Activated T-helper 1 cell treated with anti-CD3 and anti-CD28 coated beads, Interleukin-12 subunit alpha, Interleukin-12 subunit beta, Interleukin-2, Interleukin-4 antibody, amounts not matched to agents 30 ng/mL and 10 ng/mL and 1 ng/mL, durations not matched to agents 14 hours and 24 hours and 36 hours (primary cell): ENCODE measurements at regions of chr2 and their contacts with region 1.

Region 1: DNA sequence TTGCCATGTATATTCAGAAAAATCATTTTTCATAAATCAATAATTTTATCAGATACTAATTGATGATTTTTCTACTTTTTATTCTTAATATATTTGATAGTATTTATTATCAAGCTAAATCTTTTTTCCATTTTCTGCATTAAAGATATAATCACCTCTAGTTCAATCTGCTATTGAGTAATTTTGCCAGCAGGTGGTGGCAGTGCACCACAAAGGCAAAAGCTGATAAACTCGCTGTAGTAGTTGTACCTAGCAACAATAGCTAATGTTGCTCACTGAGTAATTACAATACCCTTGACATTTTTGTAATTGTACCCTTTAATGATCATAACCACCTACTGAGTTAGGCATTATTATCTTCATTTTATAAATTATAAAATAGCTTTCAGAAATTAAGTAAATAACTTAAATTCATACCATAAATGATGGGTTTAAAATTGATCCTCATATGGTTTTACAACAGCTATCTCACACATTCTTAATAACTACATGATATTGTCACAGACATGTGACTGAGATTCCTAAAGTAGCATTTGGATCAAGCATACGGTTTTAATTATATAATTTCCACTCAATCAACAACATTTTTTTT is 52.0 kb upstream of the CALCRL start:
- DNase-seq: peak; percentile 14
- H3K4me3 Mint-ChIP-seq: no peak overlapping the region
- H3K27ac Mint-ChIP-seq: no peak overlapping the region
- H3K4me1 Mint-ChIP-seq: no peaks in the 10 kb centered on the region
- H3K27me3 Mint-ChIP-seq: peaks cover 5% of the 10 kb centered on the region

Region 2: GRCh38 chr2:187842978-187843847 is 343.2 kb after region 1 on chr2:
- intact Hi-C with region 1: loop called (anchors 1 kb)
- DNase-seq: no peak
- H3K4me3 Mint-ChIP-seq: no peak overlapping the region
- H3K27ac Mint-ChIP-seq: no peak overlapping the region
- H3K4me1 Mint-ChIP-seq: no peaks in the 10 kb centered on the region
- H3K27me3 Mint-ChIP-seq: no peaks in the 10 kb centered on the region

Region 3: DNA sequence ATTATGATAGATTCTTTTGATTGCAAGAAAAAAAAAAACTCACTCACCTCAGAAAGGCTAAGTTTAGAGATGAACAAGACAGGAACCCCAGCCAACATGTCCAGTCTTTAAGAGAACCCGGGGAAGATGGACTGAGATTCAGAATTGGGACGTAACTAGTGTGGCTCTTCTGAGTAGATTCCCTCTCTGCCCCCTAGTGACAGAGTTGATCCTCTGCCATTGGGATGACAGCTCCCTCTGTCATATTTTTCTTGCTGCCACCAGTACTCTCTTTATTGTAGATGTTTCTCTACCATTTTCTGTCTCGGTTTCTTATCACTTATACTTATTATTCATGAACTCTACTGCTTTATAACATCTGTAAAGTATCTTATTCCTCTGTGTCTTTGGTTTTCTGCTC is 869.3 kb after region 1 on chr2:
- intact Hi-C with region 1: loop called (anchors 2 kb)
- DNase-seq: no peak
- H3K4me3 Mint-ChIP-seq: no peak overlapping the region
- H3K27ac Mint-ChIP-seq: no peak overlapping the region
- H3K4me1 Mint-ChIP-seq: no peaks in the 10 kb centered on the region
- H3K27me3 Mint-ChIP-seq: no peaks in the 10 kb centered on the region

Region 4: GRCh38 chr2:188512456-188512855 is 1012.4 kb after region 1 on chr2:
- intact Hi-C with region 1: loop called (anchors 5 kb)
- DNase-seq: no peak
- H3K4me3 Mint-ChIP-seq: no peak overlapping the region
- H3K27ac Mint-ChIP-seq: no peak overlapping the region
- H3K4me1 Mint-ChIP-seq: no peaks in the 10 kb centered on the region
- H3K27me3 Mint-ChIP-seq: peaks cover 2% of the 10 kb centered on the region